MCF 10A (cell line): ENCODE measurements at regions of chr17 and their contacts with region 1.

Region 1: GRCh38 chr17:67475236-67475937 is 98.3 kb downstream of the PITPNC1 start:
- DNase-seq: peak; percentile 86
- H3K4me3 Mint-ChIP-seq: no peak overlapping the region
- H3K27ac Mint-ChIP-seq: no peak overlapping the region
- H3K4me1 Mint-ChIP-seq: peaks cover 26% of the 10 kb centered on the region
- H3K27me3 Mint-ChIP-seq: no peaks in the 10 kb centered on the region
- CTCF ChIP-seq: peak; percentile 87

Region 2: DNA sequence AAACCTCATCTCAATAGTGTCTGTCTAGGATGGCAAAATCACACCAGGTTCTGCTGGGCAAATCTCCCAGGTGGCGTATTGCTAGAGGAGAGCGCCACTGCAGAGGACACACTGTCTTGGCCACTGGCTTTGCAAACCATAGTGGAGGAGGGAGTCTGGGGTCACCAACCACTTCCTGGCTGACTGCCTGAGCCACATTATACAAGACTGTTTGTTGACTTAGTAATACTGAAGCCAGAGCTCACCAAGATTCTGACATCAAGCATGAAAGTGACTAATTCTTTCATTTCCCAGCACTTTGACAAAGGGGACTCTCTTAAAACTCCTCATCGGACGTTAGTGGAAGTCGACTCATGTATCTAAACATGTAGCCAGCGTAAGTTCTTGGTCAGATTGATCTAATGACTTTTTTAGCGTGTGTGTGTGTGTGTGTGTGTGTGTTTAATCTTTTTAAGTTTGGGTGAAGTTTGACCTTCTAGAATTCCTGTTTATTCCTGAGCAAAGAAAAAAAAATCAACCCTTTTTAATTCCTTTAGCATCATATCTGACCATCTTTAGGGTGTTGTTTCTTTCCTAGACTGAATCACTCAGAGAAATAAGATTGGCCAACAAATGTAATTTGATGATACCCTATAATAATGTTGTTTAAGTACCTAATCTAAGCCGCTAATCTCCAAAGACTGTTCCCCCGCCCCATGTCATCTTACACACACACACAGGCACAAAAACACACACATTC is 84.6 kb before region 1 on chr17:
- CTCF ChIA-PET with region 1: interaction called, 59 read pairs
- POLR2A ChIA-PET with region 1: interaction called, 5 read pairs
- intact Hi-C with region 1: loop called (anchors 1 kb)
- DNase-seq: peak; percentile 92
- H3K4me3 Mint-ChIP-seq: peak overlapping the region; percentile 53
- H3K27ac Mint-ChIP-seq: peak overlapping the region; percentile 83
- H3K4me1 Mint-ChIP-seq: peaks cover 20% of the 10 kb centered on the region
- H3K27me3 Mint-ChIP-seq: no peaks in the 10 kb centered on the region
- CTCF ChIP-seq: no peak

Region 3: DNA sequence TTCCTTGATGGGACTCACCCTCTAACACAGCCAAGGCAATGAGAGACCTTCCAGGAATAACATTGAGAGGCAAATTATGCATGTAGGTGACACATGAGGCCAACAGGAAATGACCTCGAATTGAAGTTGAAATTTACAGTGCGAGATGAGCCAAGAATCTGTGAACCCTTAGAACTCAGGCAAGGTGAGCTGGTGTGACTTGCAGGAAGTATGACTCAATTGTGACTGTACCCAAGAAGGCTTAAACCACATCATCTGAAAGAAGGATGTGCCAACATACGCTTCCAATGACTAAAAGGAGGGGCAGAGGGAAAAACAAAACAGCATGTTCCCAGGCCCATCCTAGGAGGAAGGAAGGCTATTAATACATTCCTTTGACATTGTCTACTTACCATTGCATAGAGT is 53.5 kb before region 1 on chr17:
- CTCF ChIA-PET with region 1: interaction called, 6 read pairs
- POLR2A ChIA-PET with region 1: interaction called, 10 read pairs
- intact Hi-C with region 1: no loop called
- DNase-seq: peak; percentile 99
- H3K4me3 Mint-ChIP-seq: peak overlapping the region; percentile 29
- H3K27ac Mint-ChIP-seq: peak overlapping the region; percentile 86
- H3K4me1 Mint-ChIP-seq: peaks cover 35% of the 10 kb centered on the region
- H3K27me3 Mint-ChIP-seq: no peaks in the 10 kb centered on the region
- CTCF ChIP-seq: no peak

Region 4: DNA sequence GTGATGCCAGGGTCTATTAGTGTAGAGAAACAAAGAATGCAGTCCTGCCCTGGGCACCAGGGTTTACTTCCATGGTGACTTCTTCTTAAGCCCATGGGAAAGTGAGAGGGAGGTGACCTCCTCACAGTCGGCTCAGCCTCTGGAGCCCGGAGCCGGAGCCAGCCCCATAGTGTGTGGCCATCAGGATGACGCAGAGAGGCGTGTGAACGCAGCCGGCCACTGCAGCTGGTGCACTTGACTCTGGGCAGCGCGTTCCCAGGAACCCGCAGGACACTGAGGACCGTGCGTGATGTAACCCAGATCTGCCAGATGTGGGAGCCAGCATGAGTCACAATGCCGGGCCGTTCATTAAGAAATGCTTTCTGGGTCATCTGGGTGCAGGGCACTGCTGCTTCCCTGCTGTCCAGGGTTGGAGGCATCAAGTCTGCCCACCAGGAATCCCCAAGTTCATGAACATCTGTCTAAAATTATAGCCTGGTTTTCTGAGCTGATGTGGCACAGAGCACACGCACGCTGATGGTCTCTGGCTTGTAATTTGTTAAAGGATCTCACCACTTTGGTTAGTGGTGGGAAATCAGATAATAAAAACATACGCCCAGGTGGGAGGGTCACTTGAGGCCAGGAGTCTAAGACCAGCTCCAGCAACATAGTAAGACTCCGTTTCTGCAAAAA is 15.8 kb after region 1 on chr17:
- CTCF ChIA-PET with region 1: interaction called, 13 read pairs
- POLR2A ChIA-PET with region 1: interaction called, 4 read pairs
- intact Hi-C with region 1: no loop called
- DNase-seq: peak; percentile 97
- H3K4me3 Mint-ChIP-seq: peak overlapping the region; percentile 59
- H3K27ac Mint-ChIP-seq: peak overlapping the region; percentile 18
- H3K4me1 Mint-ChIP-seq: peaks cover 10% of the 10 kb centered on the region
- H3K27me3 Mint-ChIP-seq: no peaks in the 10 kb centered on the region
- CTCF ChIP-seq: no peak

Region 5: GRCh38 chr17:67637917-67638641 is 162.7 kb after region 1 on chr17:
- CTCF ChIA-PET with region 1: interaction called, 15 read pairs
- POLR2A ChIA-PET with region 1: no interaction called
- intact Hi-C with region 1: no loop called
- DNase-seq: peak; percentile 75
- H3K4me3 Mint-ChIP-seq: no peak overlapping the region
- H3K27ac Mint-ChIP-seq: no peak overlapping the region
- H3K4me1 Mint-ChIP-seq: peaks cover 13% of the 10 kb centered on the region
- H3K27me3 Mint-ChIP-seq: no peaks in the 10 kb centered on the region
- CTCF ChIP-seq: no peak

Region 6: DNA sequence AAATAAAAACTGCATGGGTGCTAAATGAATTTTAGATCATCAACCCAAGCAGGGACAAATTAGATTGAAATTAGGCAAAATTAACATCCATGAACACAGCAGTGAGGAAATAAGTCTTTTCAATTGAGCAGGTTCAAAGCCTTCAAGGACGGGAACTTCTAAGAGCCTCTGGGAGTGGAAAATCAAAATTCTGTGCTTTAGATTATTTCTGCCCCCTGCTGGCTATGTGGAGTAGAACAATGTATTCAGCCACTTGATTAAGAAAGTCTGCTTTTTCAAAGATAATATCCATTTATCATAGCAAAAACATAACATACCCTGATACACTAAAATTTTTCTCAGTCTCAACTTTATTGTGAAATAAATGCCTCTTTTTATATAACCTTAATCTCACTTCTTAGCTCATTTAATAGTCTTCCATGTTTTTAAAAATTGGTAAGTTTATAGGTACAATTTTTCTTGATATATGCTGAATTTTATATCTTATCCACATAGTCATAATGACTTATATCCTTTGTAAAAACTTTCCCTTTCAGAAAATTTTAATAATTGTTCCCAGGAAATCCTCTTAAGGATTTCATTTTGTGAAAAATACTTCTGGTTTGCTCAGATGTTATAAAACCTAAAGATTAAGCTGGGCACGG is 214.3 kb after region 1 on chr17:
- CTCF ChIA-PET with region 1: interaction called, 3 read pairs
- POLR2A ChIA-PET with region 1: interaction called, 4 read pairs
- intact Hi-C with region 1: loop called (anchors 5 kb)
- DNase-seq: peak; percentile 68
- H3K4me3 Mint-ChIP-seq: no peak overlapping the region
- H3K27ac Mint-ChIP-seq: no peak overlapping the region
- H3K4me1 Mint-ChIP-seq: no peaks in the 10 kb centered on the region
- H3K27me3 Mint-ChIP-seq: no peaks in the 10 kb centered on the region
- CTCF ChIP-seq: peak; percentile 69